ENCODE measurements at regions of chr10 and their contacts with region 1.

Region 1: GRCh38 chr10:99845837-99846382 is 63.5 kb downstream of the ABCC2 start:
- DNase-seq: peak; percentile 28 to 87 (median 72)
- ATAC-seq: peak; percentile 84
- H3K4me3 ChIP-seq: peak overlapping the region in 1 of 2 experiments; percentile 7
- H3K4me3 Mint-ChIP-seq: peak overlapping the region; percentile 30
- H3K27ac ChIP-seq: no peak overlapping the region
- H3K27ac Mint-ChIP-seq: no peak overlapping the region
- H3K4me1 ChIP-seq: no peaks in the 10 kb centered on the region
- H3K4me1 Mint-ChIP-seq: peaks cover 7% of the 10 kb centered on the region
- H3K27me3 ChIP-seq: no peaks in the 10 kb centered on the region
- H3K27me3 Mint-ChIP-seq: no peaks in the 10 kb centered on the region
- CTCF ChIP-seq: peak; percentile 94

Region 2: GRCh38 chr10:99827936-99828335 is 18.0 kb before region 1 on chr10:
- CTCF ChIA-PET with region 1: interaction called, 33 read pairs
- POLR2A ChIA-PET with region 1: no interaction called
- intact Hi-C with region 1: no loop called
- DNase-seq: no peak
- ATAC-seq: no peak
- H3K4me3 ChIP-seq: no peak overlapping the region
- H3K4me3 Mint-ChIP-seq: no peak overlapping the region
- H3K27ac ChIP-seq: peak overlapping the region in 1 of 2 experiments; percentile 14
- H3K27ac Mint-ChIP-seq: no peak overlapping the region
- H3K4me1 ChIP-seq: no peaks in the 10 kb centered on the region
- H3K4me1 Mint-ChIP-seq: peaks cover 5% of the 10 kb centered on the region
- H3K27me3 ChIP-seq: no peaks in the 10 kb centered on the region
- H3K27me3 Mint-ChIP-seq: no peaks in the 10 kb centered on the region
- CTCF ChIP-seq: no peak

Region 3: DNA sequence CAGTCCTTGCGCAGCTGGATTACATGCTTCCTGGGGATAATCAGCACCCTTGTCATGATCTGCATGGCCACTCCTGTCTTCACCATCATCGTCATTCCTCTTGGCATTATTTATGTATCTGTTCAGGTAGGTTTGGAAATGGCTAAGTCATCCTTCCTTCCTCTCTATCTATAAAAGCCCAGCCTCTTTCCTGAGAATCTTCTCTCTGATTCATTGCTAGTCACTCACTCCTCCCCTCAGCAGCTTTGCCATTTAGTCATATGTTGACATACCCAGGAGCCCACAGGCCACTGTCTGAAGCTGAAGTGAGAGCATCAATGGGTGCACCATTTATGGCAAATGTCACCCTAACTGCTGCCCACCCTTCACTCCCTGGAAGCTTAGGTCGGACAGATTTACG is 11.5 kb before region 1 on chr10:
- CTCF ChIA-PET with region 1: interaction called, 33 read pairs
- POLR2A ChIA-PET with region 1: no interaction called
- intact Hi-C with region 1: no loop called
- DNase-seq: no peak
- ATAC-seq: no peak
- H3K4me3 ChIP-seq: no peak overlapping the region
- H3K4me3 Mint-ChIP-seq: no peak overlapping the region
- H3K27ac ChIP-seq: no peak overlapping the region
- H3K27ac Mint-ChIP-seq: no peak overlapping the region
- H3K4me1 ChIP-seq: no peaks in the 10 kb centered on the region
- H3K4me1 Mint-ChIP-seq: no peaks in the 10 kb centered on the region
- H3K27me3 ChIP-seq: no peaks in the 10 kb centered on the region
- H3K27me3 Mint-ChIP-seq: no peaks in the 10 kb centered on the region
- CTCF ChIP-seq: no peak

Region 4: GRCh38 chr10:100020142-100020885 is 174.4 kb after region 1 on chr10:
- CTCF ChIA-PET with region 1: interaction called, 14 read pairs
- POLR2A ChIA-PET with region 1: no interaction called
- intact Hi-C with region 1: no loop called
- DNase-seq: peak in 2 of 9 experiments; percentile 10 to 33
- ATAC-seq: peak; percentile 62
- H3K4me3 ChIP-seq: no peak overlapping the region
- H3K4me3 Mint-ChIP-seq: no peak overlapping the region
- H3K27ac ChIP-seq: no peak overlapping the region
- H3K27ac Mint-ChIP-seq: peak overlapping the region; percentile 20
- H3K4me1 ChIP-seq: no peaks in the 10 kb centered on the region
- H3K4me1 Mint-ChIP-seq: peaks cover 5% of the 10 kb centered on the region
- H3K27me3 ChIP-seq: no peaks in the 10 kb centered on the region
- H3K27me3 Mint-ChIP-seq: peaks cover 3% of the 10 kb centered on the region
- CTCF ChIP-seq: no peak

Region 5: DNA sequence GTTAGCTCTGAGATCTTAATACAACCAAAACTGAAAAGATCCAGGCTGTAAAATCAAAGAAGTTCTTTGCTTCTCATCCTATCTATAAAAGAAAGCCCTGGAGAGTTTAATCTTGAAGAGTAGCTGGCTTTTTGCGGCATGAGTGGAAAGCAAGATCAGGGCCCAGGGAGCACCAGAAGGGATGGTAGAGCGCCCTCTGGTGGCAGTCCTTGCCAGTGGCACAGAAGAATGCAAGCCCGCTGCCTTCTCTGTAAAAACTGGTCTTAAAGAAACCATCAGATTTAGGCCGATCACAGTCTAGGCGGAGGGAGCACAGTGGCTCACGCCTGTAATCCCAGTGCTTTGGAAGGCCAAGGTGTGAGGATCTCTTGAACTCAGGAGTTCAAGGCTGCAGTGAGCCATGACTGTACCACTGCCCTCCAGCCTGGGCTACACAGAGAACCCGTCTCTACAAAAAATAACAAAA is 200.1 kb after region 1 on chr10:
- CTCF ChIA-PET with region 1: interaction called, 256 read pairs
- POLR2A ChIA-PET with region 1: interaction called, 7 read pairs
- intact Hi-C with region 1: loop called (anchors 1 to 2 kb)
- DNase-seq: peak; percentile 58 to 87 (median 78)
- ATAC-seq: peak; percentile 67
- H3K4me3 ChIP-seq: no peak overlapping the region
- H3K4me3 Mint-ChIP-seq: no peak overlapping the region
- H3K27ac ChIP-seq: no peak overlapping the region
- H3K27ac Mint-ChIP-seq: no peak overlapping the region
- H3K4me1 ChIP-seq: no peaks in the 10 kb centered on the region
- H3K4me1 Mint-ChIP-seq: no peaks in the 10 kb centered on the region
- H3K27me3 ChIP-seq: no peaks in the 10 kb centered on the region
- H3K27me3 Mint-ChIP-seq: no peaks in the 10 kb centered on the region
- CTCF ChIP-seq: peak; percentile 83

Region 6: GRCh38 chr10:100053686-100054460 is 208.0 kb after region 1 on chr10:
- CTCF ChIA-PET with region 1: interaction called, 256 read pairs
- POLR2A ChIA-PET with region 1: no interaction called
- intact Hi-C with region 1: no loop called
- DNase-seq: no peak
- ATAC-seq: no peak
- H3K4me3 ChIP-seq: no peak overlapping the region
- H3K4me3 Mint-ChIP-seq: no peak overlapping the region
- H3K27ac ChIP-seq: no peak overlapping the region
- H3K27ac Mint-ChIP-seq: no peak overlapping the region
- H3K4me1 ChIP-seq: no peaks in the 10 kb centered on the region
- H3K4me1 Mint-ChIP-seq: no peaks in the 10 kb centered on the region
- H3K27me3 ChIP-seq: no peaks in the 10 kb centered on the region
- H3K27me3 Mint-ChIP-seq: peaks cover 17% of the 10 kb centered on the region
- CTCF ChIP-seq: no peak

Region 7: GRCh38 chr10:100229819-100230422 is 384.0 kb after region 1 on chr10:
- CTCF ChIA-PET with region 1: no interaction called
- POLR2A ChIA-PET with region 1: no interaction called
- intact Hi-C with region 1: loop called in 1 of 2 experiments (anchors 10 kb)
- DNase-seq: peak in 1 of 9 experiments; percentile 9
- ATAC-seq: no peak
- H3K4me3 ChIP-seq: peak overlapping the region; percentile 66 to 99
- H3K4me3 Mint-ChIP-seq: peak overlapping the region; percentile 93
- H3K27ac ChIP-seq: peak overlapping the region; percentile 83 to 89
- H3K27ac Mint-ChIP-seq: peak overlapping the region; percentile 95
- H3K4me1 ChIP-seq: peaks cover 21% of the 10 kb centered on the region
- H3K4me1 Mint-ChIP-seq: peaks cover 32% of the 10 kb centered on the region
- H3K27me3 ChIP-seq: no peaks in the 10 kb centered on the region
- H3K27me3 Mint-ChIP-seq: no peaks in the 10 kb centered on the region
- CTCF ChIP-seq: no peak

Region 8: GRCh38 chr10:100382553-100382952 is 536.6 kb after region 1 on chr10:
- CTCF ChIA-PET with region 1: no interaction called
- POLR2A ChIA-PET with region 1: no interaction called
- intact Hi-C with region 1: no loop called
- DNase-seq: no peak
- ATAC-seq: no peak
- H3K4me3 ChIP-seq: no peak overlapping the region
- H3K4me3 Mint-ChIP-seq: no peak overlapping the region
- H3K27ac ChIP-seq: no peak overlapping the region
- H3K27ac Mint-ChIP-seq: no peak overlapping the region
- H3K4me1 ChIP-seq: no peaks in the 10 kb centered on the region
- H3K4me1 Mint-ChIP-seq: peaks cover 6% of the 10 kb centered on the region
- H3K27me3 ChIP-seq: no peaks in the 10 kb centered on the region
- H3K27me3 Mint-ChIP-seq: no peaks in the 10 kb centered on the region
- CTCF ChIP-seq: no peak